GM13976 (cell line): ENCODE measurements at regions of chr15 and their contacts with region 1.

Region 1: GRCh38 chr15:41774062-41774881 is at the start of gene MAPKBP1:
- DNase-seq: peak; percentile 97
- CTCF ChIP-seq: peak; percentile 94

Region 2: DNA sequence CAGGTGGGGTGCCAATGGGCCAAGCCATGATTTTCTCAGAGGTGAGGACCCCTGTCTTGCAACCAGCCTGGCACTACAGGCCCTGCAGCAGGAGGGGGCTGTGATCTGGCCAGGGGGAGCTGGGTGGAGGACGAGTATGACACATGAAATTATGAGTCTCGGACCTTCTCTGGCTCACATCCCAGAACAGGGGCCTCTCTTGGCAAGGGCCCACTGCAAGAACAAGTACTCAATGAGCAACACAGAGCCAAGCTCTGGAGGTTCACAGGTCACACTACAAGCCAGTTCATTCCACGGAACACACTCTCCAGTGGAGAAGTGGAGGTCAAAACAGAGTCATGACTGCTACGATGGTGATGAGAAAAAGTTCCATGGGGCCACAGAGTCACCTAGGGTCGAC is 1237.8 kb before region 1 on chr15:
- in situ Hi-C with region 1: no loop called
- DNase-seq: no peak
- CTCF ChIP-seq: no peak

Region 3: DNA sequence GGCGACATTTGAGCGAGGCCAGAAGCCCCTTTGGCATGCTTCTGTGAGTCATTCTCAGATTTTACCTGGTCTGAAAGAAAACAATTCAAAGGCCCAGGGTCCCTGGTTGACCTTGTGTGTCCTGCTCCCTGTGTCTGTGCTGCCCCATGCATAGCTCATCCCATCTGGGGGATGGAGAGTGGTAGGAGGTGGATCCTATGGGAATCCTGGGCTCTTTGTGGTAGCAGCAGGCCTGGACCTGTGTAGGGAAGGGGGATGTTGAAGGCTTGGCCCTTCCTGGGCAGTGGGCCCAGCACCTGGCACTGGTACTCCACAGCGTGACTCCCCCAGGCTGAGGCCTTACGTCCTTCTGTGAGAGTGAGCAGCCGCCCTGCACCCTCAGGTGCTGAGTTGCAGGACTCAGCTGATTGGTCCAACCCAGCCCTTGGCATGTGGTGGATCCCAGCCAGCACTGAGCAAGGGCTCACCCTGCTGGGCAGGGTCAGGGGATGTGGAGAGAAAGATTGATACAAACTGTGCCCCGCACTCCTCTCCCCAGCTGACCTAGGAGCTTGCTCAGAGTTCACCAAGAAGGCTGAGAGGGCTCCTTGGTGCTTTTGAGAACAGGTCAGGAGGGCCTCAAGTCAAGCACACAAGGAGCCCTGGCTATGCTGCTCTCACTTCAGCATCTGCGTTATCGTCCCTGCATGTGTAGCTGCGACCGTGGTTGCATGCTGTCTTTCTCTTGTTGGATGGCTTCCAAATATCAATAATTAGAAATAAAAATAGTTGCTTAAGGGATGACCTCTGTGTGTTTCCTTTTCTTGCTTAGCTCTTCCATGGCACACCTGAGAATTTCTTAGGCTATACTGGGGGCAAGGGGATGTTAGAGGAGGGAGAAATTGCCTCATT is 32.3 kb after region 1 on chr15:
- in situ Hi-C with region 1: loop called (anchors 5 kb)
- DNase-seq: no peak
- CTCF ChIP-seq: no peak